ACHN (cell line): ENCODE measurements at regions of chr4 and their contacts with region 1.

Region 1: DNA sequence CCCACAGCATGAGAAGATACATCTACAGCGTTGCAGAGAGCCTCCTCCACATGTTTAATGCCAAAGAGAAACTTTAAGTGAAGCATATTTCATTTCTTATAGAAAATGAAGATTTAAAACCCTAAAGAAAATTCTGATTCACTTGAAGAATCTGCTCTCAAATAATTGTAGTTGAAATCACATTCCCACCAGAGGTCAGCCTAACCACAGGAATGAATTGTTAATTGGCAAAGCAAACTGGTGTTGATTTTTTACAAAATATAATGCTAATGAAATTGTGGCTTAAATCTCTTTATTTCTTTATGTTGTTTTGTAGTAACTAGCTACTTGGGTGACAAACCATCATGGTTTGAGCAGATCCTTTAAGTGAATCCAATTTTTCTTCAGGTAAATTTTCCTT is 31.1 kb upstream of the WDR17 start:
- DNase-seq: peak; percentile 45

Region 2: DNA sequence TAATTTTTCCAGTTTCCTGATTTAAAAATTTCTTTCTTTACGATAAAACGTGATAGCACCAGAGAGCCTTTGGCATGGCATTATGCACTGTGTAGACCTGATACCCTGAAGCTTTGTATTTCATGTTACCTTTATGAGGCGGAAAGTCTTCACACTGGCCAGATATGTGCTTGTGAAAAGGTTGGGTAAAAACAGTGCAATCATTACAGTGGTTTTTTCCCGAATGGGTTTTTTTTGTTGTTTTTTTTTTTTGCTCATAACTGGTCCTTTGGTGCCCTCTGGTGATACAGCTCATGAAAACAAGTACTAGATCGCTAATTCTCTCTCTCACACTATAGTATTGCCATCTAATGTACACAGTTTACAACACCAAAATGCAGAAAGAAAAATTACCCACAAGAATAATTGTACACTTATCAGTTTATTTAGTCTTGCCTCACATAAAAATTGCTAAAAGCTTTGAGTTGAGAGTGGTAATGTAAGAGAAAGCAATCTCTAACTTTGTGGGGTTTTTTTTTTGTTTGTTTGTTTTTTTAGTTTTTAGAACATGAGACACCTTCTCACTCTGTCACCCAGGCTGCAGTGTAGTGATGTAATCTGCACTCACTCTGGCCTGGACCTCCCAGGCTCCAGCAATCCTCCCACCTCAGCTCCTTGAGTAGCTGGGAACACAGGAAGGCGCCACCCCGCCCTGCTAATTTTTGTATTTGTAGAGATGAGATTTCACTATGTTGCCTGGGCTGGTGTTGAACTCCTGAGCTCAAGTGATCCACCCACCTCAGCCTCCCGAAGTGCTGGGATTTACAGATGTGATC is 306.6 kb after region 1 on chr4:
- in situ Hi-C with region 1: loop called (anchors 25 kb)
- DNase-seq: peak; percentile 54